ENCODE measurements at regions of chr9 and their contacts with region 1.

Region 1: GRCh38 chr9:19074836-19075235 is 25.6 kb downstream of the RRAGA start:
- DNase-seq: no peak
- ATAC-seq: no peak
- H3K4me3 ChIP-seq: no peak overlapping the region
- H3K27ac ChIP-seq: no peak overlapping the region
- H3K4me1 ChIP-seq: no peaks in the 10 kb centered on the region
- H3K27me3 ChIP-seq: no peaks in the 10 kb centered on the region
- CTCF ChIP-seq: no peak

Region 2: GRCh38 chr9:19331877-19332276 is 257.0 kb after region 1 on chr9:
- intact Hi-C with region 1: no loop called
- DNase-seq: no peak
- ATAC-seq: no peak
- H3K4me3 ChIP-seq: no peak overlapping the region
- H3K27ac ChIP-seq: no peak overlapping the region
- H3K4me1 ChIP-seq: no peaks in the 10 kb centered on the region
- H3K27me3 ChIP-seq: no peaks in the 10 kb centered on the region
- CTCF ChIP-seq: no peak

Region 3: DNA sequence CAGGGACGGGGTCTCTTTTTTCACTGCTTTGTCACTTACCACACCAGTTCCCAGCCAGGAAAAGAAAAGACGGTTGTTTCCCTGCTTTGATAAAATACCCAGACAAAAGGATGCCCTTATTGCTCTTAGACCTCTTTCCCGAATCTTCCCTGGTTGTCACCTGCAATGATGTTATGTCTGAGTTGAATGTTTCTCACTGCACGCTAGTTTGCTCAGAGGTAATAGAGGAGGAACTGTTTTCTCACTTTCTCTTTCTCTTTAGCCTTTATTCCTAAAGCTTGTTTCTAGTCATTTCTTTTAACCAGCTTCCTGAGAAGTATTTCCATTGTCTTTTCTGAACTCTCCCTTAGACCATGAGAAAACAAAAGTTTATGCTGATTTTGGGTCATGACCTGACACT is 366.9 kb after region 1 on chr9:
- intact Hi-C with region 1: loop called in 1 of 10 experiments (anchors 10 kb)
- DNase-seq: no peak
- ATAC-seq: no peak
- H3K4me3 ChIP-seq: peak overlapping the region in 3 of 10 donors; percentile 17 to 34 (median 20)
- H3K27ac ChIP-seq: peak overlapping the region in 8 of 10 donors; percentile 5 to 51 (median 35)
- H3K4me1 ChIP-seq: peaks cover 0 to 18% (median 3%) of the 10 kb centered on the region in 9 donors
- H3K27me3 ChIP-seq: no peaks in the 10 kb centered on the region
- CTCF ChIP-seq: no peak